HepG2 (cell line): ENCODE measurements at regions of chr6 and their contacts with region 1.

Region 1: DNA sequence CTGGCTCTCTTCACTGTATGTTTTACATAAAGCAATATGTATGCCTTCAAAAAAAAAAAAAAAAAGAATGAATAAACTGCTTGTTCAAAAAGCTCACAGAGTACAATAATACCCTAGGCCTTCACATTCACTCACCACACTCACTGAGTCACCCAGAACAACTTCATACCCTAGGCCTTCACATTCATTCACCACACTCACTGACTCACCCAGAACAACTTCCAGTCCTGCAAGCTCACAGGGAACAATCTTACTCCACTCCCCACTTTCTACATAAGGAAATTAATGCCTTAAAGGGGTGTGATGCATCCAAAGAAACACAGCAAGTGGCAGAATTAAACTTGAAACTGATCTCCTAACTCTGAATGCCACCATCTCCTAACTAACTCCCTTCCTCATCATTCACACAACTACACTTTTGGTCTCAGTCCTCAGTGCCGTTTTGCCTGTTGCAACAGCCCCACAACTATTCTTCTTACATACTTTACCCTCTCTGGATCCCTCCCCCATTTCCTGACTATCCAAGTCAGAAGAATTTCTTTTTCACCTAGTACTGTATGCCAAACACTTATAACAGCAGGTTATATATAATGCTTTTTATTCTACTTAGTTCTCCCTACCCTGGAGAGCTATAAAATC is 34.2 kb downstream of the NHSL1 start:
- DNase-seq: peak; percentile 61
- ATAC-seq: peak; percentile 18; the same call in 1 of the 3 replicates
- H3K4me3 ChIP-seq: no peak overlapping the region
- H3K27ac ChIP-seq: no peak overlapping the region
- H3K4me1 ChIP-seq: peaks cover 16% of the 10 kb centered on the region
- H3K27me3 ChIP-seq: no peaks in the 10 kb centered on the region
- CTCF ChIP-seq: no peak
- EP300 ChIP-seq: no peak
- POLR2A ChIP-seq: no peak
- RAD21 ChIP-seq: no peak

Region 2: GRCh38 chr6:138145402-138145801 is 319.7 kb before region 1 on chr6:
- CTCF ChIA-PET with region 1: no interaction called
- POLR2A ChIA-PET with region 1: no interaction called
- in situ Hi-C with region 1: no loop called
- intact Hi-C with region 1: no loop called
- DNase-seq: no peak
- ATAC-seq: no peak
- H3K4me3 ChIP-seq: no peak overlapping the region
- H3K27ac ChIP-seq: no peak overlapping the region
- H3K4me1 ChIP-seq: no peaks in the 10 kb centered on the region
- H3K27me3 ChIP-seq: peaks cover 1 to 26% of the 10 kb centered on the region in 2 experiments; a peak in 3 of 5 replicates
- CTCF ChIP-seq: no peak
- EP300 ChIP-seq: no peak
- POLR2A ChIP-seq: no peak
- RAD21 ChIP-seq: no peak

Region 3: DNA sequence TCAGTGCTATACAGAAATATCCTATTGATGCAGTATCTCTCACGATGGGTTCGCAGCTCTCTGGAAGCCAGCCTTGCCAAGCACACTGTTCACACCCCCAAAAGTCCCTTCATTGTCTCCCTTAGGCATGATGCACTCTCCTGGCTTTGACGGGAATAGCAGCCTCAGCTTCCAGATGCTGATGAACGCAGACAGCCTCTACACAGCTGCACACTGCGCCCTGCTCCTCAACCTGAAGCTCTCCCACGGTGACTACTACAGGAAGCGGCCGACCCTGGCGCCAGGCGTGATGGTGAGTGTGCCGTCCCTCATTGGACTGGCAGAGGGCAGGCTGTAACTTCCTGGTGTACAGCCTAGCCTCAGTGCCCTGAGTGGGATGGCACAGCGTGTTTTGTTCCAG is 186.8 kb before region 1 on chr6:
- CTCF ChIA-PET with region 1: no interaction called
- POLR2A ChIA-PET with region 1: no interaction called
- in situ Hi-C with region 1: no loop called
- intact Hi-C with region 1: no loop called
- DNase-seq: peak; percentile 64
- ATAC-seq: peak; percentile 97
- H3K4me3 ChIP-seq: no peak overlapping the region
- H3K27ac ChIP-seq: no peak overlapping the region
- H3K4me1 ChIP-seq: no peaks in the 10 kb centered on the region
- H3K27me3 ChIP-seq: no peaks in the 10 kb centered on the region
- CTCF ChIP-seq: peak; percentile 87
- EP300 ChIP-seq: no peak
- POLR2A ChIP-seq: no peak
- RAD21 ChIP-seq: peak; percentile 72; the same call in 1 of the 2 replicates

Region 4: GRCh38 chr6:138509371-138509770 is 44.2 kb after region 1 on chr6:
- CTCF ChIA-PET with region 1: no interaction called
- POLR2A ChIA-PET with region 1: interaction called, 14 read pairs
- in situ Hi-C with region 1: no loop called
- intact Hi-C with region 1: loop called (anchors 2 kb)
- DNase-seq: peak; percentile 71
- ATAC-seq: peak; percentile 31; the same call in 2 of the 3 replicates
- H3K4me3 ChIP-seq: no peak overlapping the region
- H3K27ac ChIP-seq: no peak overlapping the region
- H3K4me1 ChIP-seq: peaks cover 54% of the 10 kb centered on the region
- H3K27me3 ChIP-seq: no peaks in the 10 kb centered on the region
- CTCF ChIP-seq: peak; percentile 90
- EP300 ChIP-seq: no peak
- POLR2A ChIP-seq: no peak
- RAD21 ChIP-seq: peak; percentile 63; the same call in 1 of the 2 replicates

Region 5: DNA sequence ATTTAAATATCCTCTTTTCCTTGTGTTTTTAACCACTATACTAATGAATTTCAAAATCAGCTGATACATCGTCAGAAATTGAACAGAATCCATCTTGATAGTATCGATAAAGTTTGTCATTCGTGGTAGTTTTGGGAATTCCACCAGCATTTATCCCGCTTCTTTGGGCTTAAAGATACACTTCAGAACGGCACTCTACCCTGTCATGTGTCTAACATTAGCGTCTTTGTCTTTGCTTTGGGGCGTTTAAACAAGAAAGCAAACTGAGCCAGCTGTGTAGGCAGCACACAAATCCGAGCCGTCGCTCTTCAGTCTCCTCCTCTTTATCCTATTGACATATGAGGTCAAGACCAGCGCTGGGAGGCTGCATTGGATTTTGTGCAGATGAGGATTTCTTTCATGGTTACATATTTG is 61.7 kb after region 1 on chr6:
- CTCF ChIA-PET with region 1: no interaction called
- POLR2A ChIA-PET with region 1: no interaction called
- in situ Hi-C with region 1: no loop called
- intact Hi-C with region 1: no loop called
- DNase-seq: peak; percentile 93
- ATAC-seq: peak; percentile 95
- H3K4me3 ChIP-seq: peak overlapping the region; percentile 9 to 32 (median 30); a peak in 3 of 6 replicates
- H3K27ac ChIP-seq: peak overlapping the region; percentile 67
- H3K4me1 ChIP-seq: peaks cover 63% of the 10 kb centered on the region
- H3K27me3 ChIP-seq: no peaks in the 10 kb centered on the region
- CTCF ChIP-seq: 0 out of 2 replicates have a peak, but pooled peaks have one; percentile 9
- EP300 ChIP-seq: peak in 1 of 2 experiments; percentile 69; a peak in 2 of 4 replicates
- POLR2A ChIP-seq: no peak
- RAD21 ChIP-seq: no peak